Mammary epithelial cell (primary cell): ENCODE measurements at regions of chr11 and their contacts with region 1.

Region 1: GRCh38 chr11:20337526-20338154 is 25.9 kb upstream of the HTATIP2 start:
- DNase-seq: peak; percentile 8
- H3K4me3 ChIP-seq: no peak overlapping the region
- H3K27ac ChIP-seq: no peak overlapping the region
- H3K4me1 ChIP-seq: no peaks in the 10 kb centered on the region
- H3K27me3 ChIP-seq: peaks cover 14% of the 10 kb centered on the region
- CTCF ChIP-seq: peak; percentile 35 to 45

Region 2: GRCh38 chr11:19938169-19938856 is 399.3 kb before region 1 on chr11:
- CTCF ChIA-PET with region 1: no interaction called
- dilution Hi-C with region 1: no loop called
- in situ Hi-C with region 1: loop called in 1 of 2 experiments (anchors 25 kb)
- intact Hi-C with region 1: no loop called
- DNase-seq: peak; percentile 46
- H3K4me3 ChIP-seq: no peak overlapping the region
- H3K27ac ChIP-seq: peak overlapping the region; percentile 0
- H3K4me1 ChIP-seq: peaks cover 23% of the 10 kb centered on the region
- H3K27me3 ChIP-seq: no peaks in the 10 kb centered on the region
- CTCF ChIP-seq: peak; percentile 85 to 93

Region 3: GRCh38 chr11:20274031-20274430 is 63.6 kb before region 1 on chr11:
- CTCF ChIA-PET with region 1: no interaction called
- dilution Hi-C with region 1: no loop called
- in situ Hi-C with region 1: no loop called
- intact Hi-C with region 1: no loop called
- DNase-seq: no peak
- H3K4me3 ChIP-seq: no peak overlapping the region
- H3K27ac ChIP-seq: no peak overlapping the region
- H3K4me1 ChIP-seq: no peaks in the 10 kb centered on the region
- H3K27me3 ChIP-seq: peaks cover 16% of the 10 kb centered on the region
- CTCF ChIP-seq: no peak